Activated CD4-positive, alpha-beta T cell treated with anti-CD3 and anti-CD28 coated beads, Interleukin-2, amount 10 ng/mL, durations not matched to agents 24 days and 14 days (primary cell): ENCODE measurements at regions of chrX and their contacts with region 1.

Region 1: DNA sequence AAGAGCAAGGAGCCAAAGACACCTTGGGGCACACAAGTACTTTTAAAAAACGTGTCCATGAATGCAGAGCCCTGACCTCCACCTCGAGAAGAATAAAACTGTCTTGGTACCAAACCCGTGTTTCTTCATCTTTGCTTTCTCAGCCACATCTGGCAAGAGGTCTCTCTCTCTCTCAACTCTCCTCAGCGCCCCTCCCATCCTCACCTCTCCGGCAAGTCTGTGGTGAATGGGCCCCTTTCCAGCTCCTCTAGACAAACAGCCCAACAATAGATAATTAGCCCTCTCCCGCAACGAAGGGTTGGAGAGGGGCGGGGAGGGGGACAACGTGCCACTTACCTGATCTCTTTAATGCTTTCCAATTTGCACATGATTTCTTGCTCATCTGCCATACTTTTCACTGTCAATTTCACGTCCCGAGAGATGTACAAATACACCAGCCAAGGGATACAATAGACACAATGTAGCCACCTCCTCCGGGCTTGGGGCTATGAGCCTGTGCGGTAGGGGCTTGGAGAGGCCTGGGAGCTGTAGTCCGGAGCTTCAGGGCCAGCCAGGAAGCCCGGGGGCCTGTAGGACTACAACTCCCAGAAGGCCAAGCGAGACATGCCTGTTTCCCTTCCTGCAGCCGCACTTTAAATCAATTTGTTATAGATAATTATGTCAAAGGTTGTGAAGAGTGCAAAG is at the start of gene ZC4H2:
- DNase-seq: peak; percentile 89
- H3K4me3 Mint-ChIP-seq: peak within 1 kb of the TSS; percentile 89
- H3K27ac Mint-ChIP-seq: peak within 1 kb of the TSS; percentile 79
- H3K4me1 Mint-ChIP-seq: peaks cover 13% of the 10 kb centered on the region
- H3K27me3 Mint-ChIP-seq: no peaks in the 10 kb centered on the region
- total RNA-seq, gene ZC4H2: 8.9 and 11.3 TPM in 2 replicates

Region 2: DNA sequence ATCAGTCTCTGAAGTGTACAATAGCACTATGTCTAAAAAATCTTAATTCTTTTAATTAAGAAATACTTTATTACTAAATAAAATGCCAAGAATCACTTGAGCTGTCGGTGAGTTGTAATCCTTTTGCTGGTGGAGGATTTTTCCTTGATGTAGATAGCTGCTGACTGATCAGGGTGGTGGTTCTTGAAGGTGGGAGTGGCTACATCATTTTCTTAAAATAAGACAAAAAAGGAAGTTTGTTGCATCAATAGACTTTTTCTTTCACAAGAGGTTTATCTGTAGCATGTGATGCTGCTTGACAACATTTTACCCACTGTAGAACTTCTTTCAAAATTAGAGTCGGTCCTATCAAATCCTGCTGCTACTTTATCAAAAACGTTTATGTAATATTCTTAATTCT is 68.9 kb after region 1 on chrX:
- intact Hi-C with region 1: no loop called
- DNase-seq: no peak
- H3K4me3 Mint-ChIP-seq: no peak overlapping the region
- H3K27ac Mint-ChIP-seq: no peak overlapping the region
- H3K4me1 Mint-ChIP-seq: no peaks in the 10 kb centered on the region
- H3K27me3 Mint-ChIP-seq: no peaks in the 10 kb centered on the region

Region 3: GRCh38 chrX:65534450-65535292 is 558.5 kb after region 1 on chrX and contains the start of gene LAS1L:
- intact Hi-C with region 1: loop called (anchors 1 kb)
- DNase-seq: peak; percentile 96
- H3K4me3 Mint-ChIP-seq: peak within 1 kb of the TSS; percentile 99
- H3K27ac Mint-ChIP-seq: peak within 1 kb of the TSS; percentile 100
- H3K4me1 Mint-ChIP-seq: peaks cover 11% of the 10 kb centered on the region
- H3K27me3 Mint-ChIP-seq: no peaks in the 10 kb centered on the region
- total RNA-seq, gene LAS1L: 61.0 and 64.0 TPM in 2 replicates